HepG2 (cell line): ENCODE measurements at regions of chr17 and their contacts with region 1.

Region 1: GRCh38 chr17:49390548-49391324 is 23.9 kb downstream of the PHB1 start:
- DNase-seq: peak; percentile 46
- ATAC-seq: peak; percentile 49
- H3K4me3 ChIP-seq: peak overlapping the region; percentile 38 to 66 (median 40)
- H3K27ac ChIP-seq: peak overlapping the region; percentile 6
- H3K4me1 ChIP-seq: peaks cover 56% of the 10 kb centered on the region
- H3K27me3 ChIP-seq: no peaks in the 10 kb centered on the region
- CTCF ChIP-seq: no peak
- EP300 ChIP-seq: no peak
- POLR2A ChIP-seq: peak; percentile 16 to 49; a peak in 1 of 4 replicates
- RAD21 ChIP-seq: no peak

Region 2: GRCh38 chr17:49349535-49349934 is 41.2 kb before region 1 on chr17:
- CTCF ChIA-PET with region 1: no interaction called
- POLR2A ChIA-PET with region 1: no interaction called
- in situ Hi-C with region 1: no loop called
- intact Hi-C with region 1: loop called (anchors 2 kb)
- DNase-seq: no peak
- ATAC-seq: no peak
- H3K4me3 ChIP-seq: no peak overlapping the region
- H3K27ac ChIP-seq: no peak overlapping the region
- H3K4me1 ChIP-seq: peaks cover 14% of the 10 kb centered on the region
- H3K27me3 ChIP-seq: no peaks in the 10 kb centered on the region
- CTCF ChIP-seq: no peak
- EP300 ChIP-seq: no peak
- POLR2A ChIP-seq: no peak
- RAD21 ChIP-seq: no peak

Region 3: DNA sequence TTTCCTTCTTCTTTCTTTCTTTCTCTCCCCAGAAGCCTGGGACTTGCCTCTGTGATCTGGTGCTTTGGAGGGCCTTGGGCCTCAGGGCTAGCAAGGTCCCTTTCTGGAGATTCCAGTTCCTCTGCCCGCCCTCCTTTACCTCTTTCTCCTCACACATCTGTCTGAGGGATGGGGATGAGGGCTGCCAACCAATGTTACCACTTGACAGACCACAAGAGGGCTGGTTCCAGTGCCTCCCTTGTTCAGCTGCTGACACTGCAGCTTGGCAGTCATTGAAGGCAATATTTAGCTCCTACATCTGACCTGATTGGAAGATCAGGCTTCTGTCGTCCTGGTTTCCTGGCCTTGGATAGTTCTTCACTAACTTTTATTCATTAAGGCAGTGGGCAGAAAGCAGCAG is 25.1 kb before region 1 on chr17:
- CTCF ChIA-PET with region 1: interaction called, 8 read pairs
- POLR2A ChIA-PET with region 1: interaction called, 4 read pairs
- in situ Hi-C with region 1: no loop called
- intact Hi-C with region 1: loop called (anchors 1 kb)
- DNase-seq: peak; percentile 56
- ATAC-seq: peak; percentile 66
- H3K4me3 ChIP-seq: no peak overlapping the region
- H3K27ac ChIP-seq: no peak overlapping the region
- H3K4me1 ChIP-seq: peaks cover 33% of the 10 kb centered on the region
- H3K27me3 ChIP-seq: no peaks in the 10 kb centered on the region; a peak in 2 of 5 replicates
- CTCF ChIP-seq: no peak; the same call in none of the 2 replicates
- EP300 ChIP-seq: no peak
- POLR2A ChIP-seq: no peak
- RAD21 ChIP-seq: no peak